ENCODE measurements at regions of chr7 and their contacts with region 1.

Region 1: DNA sequence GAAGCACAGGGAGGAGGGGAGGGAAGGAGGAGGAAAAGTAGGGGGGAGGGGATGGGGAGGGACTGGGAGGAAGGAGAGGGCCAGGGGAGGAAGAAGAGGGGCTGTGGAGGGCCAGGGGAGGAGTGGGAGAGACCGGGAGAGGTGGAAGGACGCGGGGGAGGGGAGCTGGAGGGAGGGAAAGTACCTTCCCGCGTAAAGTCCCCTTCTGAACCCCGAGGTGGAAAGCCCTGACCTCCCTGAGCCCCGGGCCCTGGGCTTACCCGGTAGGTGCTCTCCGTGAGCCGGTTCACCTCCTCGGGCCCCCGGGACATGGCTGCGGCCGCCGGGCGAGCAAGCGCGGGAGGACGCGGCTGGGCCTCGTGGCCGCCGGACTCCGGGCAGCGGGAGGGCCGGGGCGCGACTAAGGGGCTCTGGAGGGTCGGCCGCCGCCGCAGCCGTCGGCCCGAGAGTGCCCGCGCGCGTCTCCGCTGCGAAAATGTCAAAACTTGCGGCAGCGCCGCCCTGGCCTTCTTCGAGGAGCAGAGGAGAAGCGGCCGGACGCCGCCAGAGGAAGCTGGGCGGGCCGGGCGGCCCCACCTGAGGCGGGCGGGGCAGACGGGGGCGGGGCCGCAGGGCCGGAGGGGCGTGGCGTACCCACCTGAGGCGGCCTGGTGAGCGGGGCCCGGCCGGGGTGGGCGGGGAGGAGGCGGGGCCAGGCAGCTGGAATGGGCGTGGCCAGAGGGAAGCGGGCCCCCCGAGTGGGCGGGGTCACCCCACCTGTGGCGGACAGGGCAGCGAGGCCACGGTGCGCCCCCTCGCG is at the start of gene BAIAP2L1:
- DNase-seq: peak; percentile 92
- H3K4me3 Mint-ChIP-seq: peak within 1 kb of the TSS; percentile 50
- H3K27ac Mint-ChIP-seq: no peak within 1 kb of the TSS
- H3K4me1 Mint-ChIP-seq: peaks cover 3% of the 10 kb centered on the region
- H3K27me3 Mint-ChIP-seq: peaks cover 13% of the 10 kb centered on the region
- total RNA-seq, gene BAIAP2L1: 3.2 to 4.5 TPM

Region 2: DNA sequence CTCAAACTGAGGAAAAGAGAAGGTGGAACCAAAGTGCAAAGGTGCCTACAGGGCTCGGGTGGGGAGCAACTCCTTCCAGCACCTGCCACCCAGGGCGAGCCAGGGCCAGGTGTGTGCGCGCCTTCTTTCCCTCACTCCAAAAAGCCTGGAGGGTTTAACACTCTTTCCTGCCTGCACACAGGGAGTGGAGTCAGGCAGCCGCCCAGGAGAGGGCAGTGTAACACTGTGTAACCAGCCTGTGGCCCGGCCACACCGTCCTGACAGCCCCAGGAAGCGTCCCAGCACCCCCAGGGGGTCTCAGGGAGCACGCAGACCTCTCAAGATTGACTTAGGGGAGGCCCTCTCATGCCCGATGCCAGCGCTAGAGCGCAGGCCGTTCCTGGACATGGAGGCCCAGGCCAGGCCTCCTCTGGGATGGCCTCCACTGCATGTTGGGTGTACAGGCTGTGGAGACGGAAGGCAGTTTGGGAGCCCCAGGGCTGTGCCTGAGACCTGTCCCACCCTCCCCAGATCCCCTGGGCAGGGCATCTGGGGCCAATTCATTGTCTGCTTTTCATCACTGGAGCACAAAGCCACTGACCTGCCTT is 105.9 kb before region 1 on chr7:
- CTCF ChIA-PET with region 1: interaction called, 5 read pairs
- POLR2A ChIA-PET with region 1: no interaction called
- intact Hi-C with region 1: loop called (anchors 1 kb)
- DNase-seq: peak; percentile 52
- H3K4me3 Mint-ChIP-seq: no peak overlapping the region
- H3K27ac Mint-ChIP-seq: no peak overlapping the region
- H3K4me1 Mint-ChIP-seq: no peaks in the 10 kb centered on the region
- H3K27me3 Mint-ChIP-seq: no peaks in the 10 kb centered on the region

Region 3: GRCh38 chr7:98569691-98570337 is 169.1 kb after region 1 on chr7:
- CTCF ChIA-PET with region 1: no interaction called
- POLR2A ChIA-PET with region 1: no interaction called
- intact Hi-C with region 1: no loop called
- DNase-seq: no peak
- H3K4me3 Mint-ChIP-seq: no peak overlapping the region
- H3K27ac Mint-ChIP-seq: no peak overlapping the region
- H3K4me1 Mint-ChIP-seq: no peaks in the 10 kb centered on the region
- H3K27me3 Mint-ChIP-seq: peaks cover 4% of the 10 kb centered on the region

Measured in activated CD4-positive, alpha-beta memory T cell treated with anti-CD3 and anti-CD28 coated beads for 36 hours (primary cell).